ENCODE measurements at regions of chr17 and their contacts with region 1.

Region 1: DNA sequence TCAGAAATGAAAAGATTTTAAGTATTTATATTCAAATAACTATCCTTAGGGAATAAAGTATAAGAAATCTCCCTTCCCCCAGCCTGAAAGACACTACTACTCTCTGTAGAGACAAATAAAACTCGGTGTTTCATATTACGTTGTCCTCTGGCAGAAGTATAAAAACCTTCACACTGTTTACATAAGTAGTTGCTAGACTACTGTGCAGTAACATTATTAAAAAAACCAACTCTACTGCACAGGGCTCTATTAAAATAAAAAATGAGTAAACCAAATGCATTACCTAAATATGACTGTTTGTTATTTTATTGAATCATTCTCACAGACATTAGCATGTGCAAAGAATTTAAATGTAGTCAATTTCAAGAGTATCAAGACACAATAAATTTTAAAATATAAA is 67.4 kb downstream of the MED13 start:
- DNase-seq: no peak
- H3K4me3 Mint-ChIP-seq: no peak overlapping the region
- H3K27ac Mint-ChIP-seq: no peak overlapping the region
- H3K4me1 Mint-ChIP-seq: peaks cover 6% of the 10 kb centered on the region
- H3K27me3 Mint-ChIP-seq: no peaks in the 10 kb centered on the region

Region 2: DNA sequence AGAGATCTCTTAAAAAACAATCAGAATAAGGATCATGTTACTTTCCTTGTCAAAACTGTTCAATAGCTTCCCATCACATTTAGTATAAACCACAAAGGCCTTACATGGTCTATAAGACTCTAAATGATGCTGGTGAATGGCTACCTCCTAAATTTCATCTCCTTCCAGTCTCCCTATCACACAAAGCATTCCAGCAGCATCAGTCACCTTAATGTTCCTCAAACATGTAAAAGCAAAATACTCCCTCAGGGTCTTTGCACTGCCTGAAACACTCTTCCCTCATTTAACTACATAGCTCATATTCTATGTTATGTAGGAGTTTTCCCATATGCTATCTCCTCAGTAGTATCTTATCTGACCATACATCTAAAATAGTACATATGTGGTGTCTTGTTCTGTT is 16.3 kb before region 1 on chr17:
- intact Hi-C with region 1: loop called (anchors 2 kb)
- DNase-seq: no peak
- H3K4me3 Mint-ChIP-seq: no peak overlapping the region
- H3K27ac Mint-ChIP-seq: no peak overlapping the region
- H3K4me1 Mint-ChIP-seq: peaks cover 5% of the 10 kb centered on the region
- H3K27me3 Mint-ChIP-seq: no peaks in the 10 kb centered on the region

Region 3: GRCh38 chr17:62035606-62036005 is 37.9 kb after region 1 on chr17:
- intact Hi-C with region 1: loop called (anchors 1 kb)
- DNase-seq: no peak
- H3K4me3 Mint-ChIP-seq: no peak overlapping the region
- H3K27ac Mint-ChIP-seq: no peak overlapping the region
- H3K4me1 Mint-ChIP-seq: peaks cover 12% of the 10 kb centered on the region
- H3K27me3 Mint-ChIP-seq: no peaks in the 10 kb centered on the region